Activated CD8-positive, alpha-beta T cell treated with anti-CD3 and anti-CD28 coated beads for 36 hours (primary cell): ENCODE measurements at regions of chr12 and their contacts with region 1.

Region 1: GRCh38 chr12:52980693-52981423 is 25.4 kb upstream of the EIF4B start:
- DNase-seq: peak; percentile 93
- ATAC-seq: peak; percentile 95
- H3K4me3 Mint-ChIP-seq: no peak overlapping the region
- H3K27ac Mint-ChIP-seq: no peak overlapping the region
- H3K4me1 Mint-ChIP-seq: no peaks in the 10 kb centered on the region
- H3K27me3 Mint-ChIP-seq: peaks cover 27% of the 10 kb centered on the region
- CTCF ChIP-seq: peak; percentile 97

Region 2: GRCh38 chr12:52582971-52583456 is 397.8 kb before region 1 on chr12:
- CTCF ChIA-PET with region 1: interaction called, 10 read pairs
- POLR2A ChIA-PET with region 1: no interaction called
- intact Hi-C with region 1: no loop called
- DNase-seq: peak; percentile 82
- ATAC-seq: peak; percentile 83
- H3K4me3 Mint-ChIP-seq: no peak overlapping the region
- H3K27ac Mint-ChIP-seq: no peak overlapping the region
- H3K4me1 Mint-ChIP-seq: peaks cover 34% of the 10 kb centered on the region
- H3K27me3 Mint-ChIP-seq: no peaks in the 10 kb centered on the region
- CTCF ChIP-seq: peak; percentile 77

Region 3: GRCh38 chr12:52903285-52903854 is 77.5 kb before region 1 on chr12:
- CTCF ChIA-PET with region 1: interaction called, 32 read pairs
- POLR2A ChIA-PET with region 1: no interaction called
- intact Hi-C with region 1: no loop called
- DNase-seq: peak; percentile 76
- ATAC-seq: peak; percentile 90
- H3K4me3 Mint-ChIP-seq: peak overlapping the region; percentile 41
- H3K27ac Mint-ChIP-seq: no peak overlapping the region
- H3K4me1 Mint-ChIP-seq: peaks cover 4% of the 10 kb centered on the region
- H3K27me3 Mint-ChIP-seq: no peaks in the 10 kb centered on the region
- CTCF ChIP-seq: no peak

Region 4: GRCh38 chr12:52949413-52950331 is 31.2 kb before region 1 on chr12:
- CTCF ChIA-PET with region 1: interaction called, 11 read pairs
- POLR2A ChIA-PET with region 1: no interaction called
- intact Hi-C with region 1: no loop called
- DNase-seq: no peak
- ATAC-seq: no peak
- H3K4me3 Mint-ChIP-seq: peak overlapping the region; percentile 57
- H3K27ac Mint-ChIP-seq: no peak overlapping the region
- H3K4me1 Mint-ChIP-seq: no peaks in the 10 kb centered on the region
- H3K27me3 Mint-ChIP-seq: peaks cover 2% of the 10 kb centered on the region
- CTCF ChIP-seq: no peak

Region 5: GRCh38 chr12:52964556-52965332 is 16.1 kb before region 1 on chr12:
- CTCF ChIA-PET with region 1: interaction called, 25 read pairs
- POLR2A ChIA-PET with region 1: no interaction called
- intact Hi-C with region 1: no loop called
- DNase-seq: no peak
- ATAC-seq: no peak
- H3K4me3 Mint-ChIP-seq: no peak overlapping the region
- H3K27ac Mint-ChIP-seq: no peak overlapping the region
- H3K4me1 Mint-ChIP-seq: no peaks in the 10 kb centered on the region
- H3K27me3 Mint-ChIP-seq: peaks cover 10% of the 10 kb centered on the region
- CTCF ChIP-seq: no peak

Region 6: GRCh38 chr12:52992699-52993557 is 12.1 kb after region 1 on chr12:
- CTCF ChIA-PET with region 1: interaction called, 20 read pairs
- POLR2A ChIA-PET with region 1: no interaction called
- intact Hi-C with region 1: no loop called
- DNase-seq: no peak
- ATAC-seq: no peak
- H3K4me3 Mint-ChIP-seq: no peak overlapping the region
- H3K27ac Mint-ChIP-seq: no peak overlapping the region
- H3K4me1 Mint-ChIP-seq: no peaks in the 10 kb centered on the region
- H3K27me3 Mint-ChIP-seq: no peaks in the 10 kb centered on the region
- CTCF ChIP-seq: no peak